Endothelial cell of umbilical vein (primary cell): ENCODE measurements at regions of chrX and their contacts with region 1.

Region 1: GRCh38 chrX:106791495-106791894 is 11.0 kb upstream of the TBC1D8B start:
- DNase-seq: peak; percentile 2
- H3K4me3 ChIP-seq: no peak overlapping the region
- H3K27ac ChIP-seq: no peak overlapping the region
- H3K4me1 ChIP-seq: no peaks in the 10 kb centered on the region
- H3K27me3 ChIP-seq: peaks cover 0 to 1% of the 10 kb centered on the region in 2 experiments
- CTCF ChIP-seq: no peak
- POLR2A ChIP-seq: no peak

Region 2: DNA sequence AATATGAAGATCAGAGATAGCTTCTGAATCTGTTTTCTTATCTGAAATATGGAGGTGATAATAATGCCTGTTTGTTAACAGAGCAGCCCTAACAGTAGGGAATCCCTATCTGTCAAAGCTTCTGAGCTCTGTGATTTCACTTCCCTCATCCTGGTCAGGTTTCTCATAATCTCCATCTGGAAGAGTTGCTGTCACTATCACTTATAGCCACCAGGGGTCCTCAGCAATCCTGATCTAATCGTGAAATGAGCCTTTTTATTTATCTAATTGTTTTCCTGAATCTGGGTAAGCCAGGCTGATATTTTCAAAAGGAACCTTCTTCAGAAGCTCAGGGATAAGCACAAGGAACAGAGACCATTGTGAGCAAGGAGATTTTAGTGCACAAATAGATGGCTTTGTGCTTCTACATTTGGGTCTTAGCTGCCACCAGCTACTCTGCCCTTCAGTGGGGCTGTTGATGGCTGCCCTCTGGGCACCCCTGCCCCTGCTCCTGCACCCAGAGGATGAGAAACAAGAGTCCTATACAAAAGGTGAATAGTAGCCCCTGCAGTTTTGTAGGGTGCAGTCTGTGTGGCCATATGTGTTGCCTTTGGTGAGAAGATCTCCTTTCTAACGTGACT is 376.1 kb before region 1 on chrX:
- CTCF ChIA-PET with region 1: no interaction called
- POLR2A ChIA-PET with region 1: no interaction called
- dilution Hi-C with region 1: no loop called
- intact Hi-C with region 1: loop called (anchors 5 kb)
- DNase-seq: peak; percentile 1
- H3K4me3 ChIP-seq: no peak overlapping the region
- H3K27ac ChIP-seq: no peak overlapping the region
- H3K4me1 ChIP-seq: no peaks in the 10 kb centered on the region
- H3K27me3 ChIP-seq: no peaks in the 10 kb centered on the region
- CTCF ChIP-seq: peak; percentile 7 to 34
- POLR2A ChIP-seq: no peak

Region 3: GRCh38 chrX:106874075-106874474 is 82.6 kb after region 1 on chrX:
- CTCF ChIA-PET with region 1: no interaction called
- POLR2A ChIA-PET with region 1: no interaction called
- dilution Hi-C with region 1: no loop called
- intact Hi-C with region 1: no loop called
- DNase-seq: peak; percentile 35
- H3K4me3 ChIP-seq: no peak overlapping the region
- H3K27ac ChIP-seq: no peak overlapping the region
- H3K4me1 ChIP-seq: no peaks in the 10 kb centered on the region
- H3K27me3 ChIP-seq: no peaks in the 10 kb centered on the region
- CTCF ChIP-seq: peak in 1 of 2 donors; percentile 8
- POLR2A ChIP-seq: no peak